ENCODE measurements at regions of chr16 and their contacts with region 1.

Region 1: DNA sequence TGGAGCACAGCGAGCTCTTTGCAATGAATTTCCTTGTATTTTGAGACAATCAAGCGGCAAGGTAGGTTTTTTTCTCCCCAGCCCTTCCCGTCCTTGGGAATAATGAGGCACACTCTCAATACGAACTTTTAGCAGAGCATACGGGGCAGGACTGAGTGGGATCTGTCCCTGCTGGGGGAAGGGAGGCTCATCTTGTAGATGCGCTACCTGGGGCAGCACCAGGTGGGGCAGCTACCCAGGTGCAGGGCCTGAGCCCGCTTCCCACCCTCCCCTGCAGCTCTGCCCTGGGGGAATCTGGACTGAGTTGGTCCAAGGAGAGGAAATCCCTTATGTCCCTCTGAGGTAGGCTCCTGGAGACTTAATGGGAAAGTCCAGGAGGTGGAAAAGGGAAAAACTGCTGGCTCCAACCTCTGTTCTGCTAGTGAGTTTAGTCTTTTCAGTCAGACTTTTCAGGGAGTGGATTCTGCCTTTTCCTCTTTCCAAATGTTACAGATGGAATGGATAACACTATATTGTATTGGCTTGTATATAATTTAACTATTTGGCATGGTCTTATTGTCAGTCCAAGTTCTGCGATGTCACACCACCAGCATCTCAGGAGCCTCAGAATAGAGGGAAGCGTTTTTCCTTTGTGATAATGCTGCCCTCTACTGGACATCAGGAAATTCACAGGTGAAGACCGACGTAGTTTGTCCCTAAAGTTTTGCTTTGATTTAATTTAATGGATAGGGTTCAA is 9.6 kb upstream of the CES1 start:
- DNase-seq: no peak

Region 2: GRCh38 chr16:55465077-55465896 is 377.2 kb before region 1 on chr16:
- intact Hi-C with region 1: loop called (anchors 10 kb)
- DNase-seq: peak; percentile 93

Region 3: DNA sequence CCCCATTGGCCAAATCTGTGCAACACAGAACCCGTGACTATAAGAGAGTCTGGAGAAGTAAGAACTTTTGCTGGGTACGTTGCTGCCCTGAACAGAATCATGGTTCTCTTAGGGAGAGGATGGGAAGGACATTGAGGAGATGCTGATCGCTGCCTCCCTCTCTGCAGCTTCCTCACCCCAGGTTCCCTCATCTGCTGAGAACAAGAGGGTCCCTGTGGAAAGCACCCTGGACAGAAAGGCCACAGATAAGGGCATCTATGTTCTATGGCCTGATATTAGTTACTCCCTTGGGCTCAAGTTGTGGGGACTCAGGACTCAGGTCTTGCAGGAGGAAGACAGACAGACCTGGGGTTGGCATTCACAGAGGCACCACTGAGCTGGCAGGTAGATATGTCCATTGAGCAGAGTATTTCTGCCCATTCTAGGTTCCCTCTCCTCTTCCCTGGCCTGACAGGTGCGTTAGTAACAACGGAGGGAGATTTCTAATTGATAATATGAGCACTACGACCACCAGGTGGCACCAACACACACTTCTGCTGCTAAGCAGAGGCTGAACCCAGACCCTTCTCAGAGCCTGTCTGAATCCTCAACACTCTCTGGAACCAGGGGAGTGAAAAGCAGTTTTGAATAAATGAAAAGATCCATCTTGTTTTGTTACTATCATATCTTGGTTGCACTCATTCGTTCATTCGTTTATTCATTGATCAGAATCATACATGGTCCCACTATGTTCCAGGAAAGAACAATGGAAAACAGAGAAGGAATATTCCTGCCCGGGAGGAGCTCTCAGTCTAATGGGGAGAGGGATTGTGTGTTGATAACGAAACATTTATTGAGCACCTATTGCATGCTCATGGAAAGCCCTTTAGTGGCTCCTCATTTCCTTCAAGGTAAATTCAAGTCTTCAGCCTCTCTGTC is 130.3 kb before region 1 on chr16:
- intact Hi-C with region 1: loop called (anchors 1 kb)
- DNase-seq: no peak

Measured in cardiac septum (tissue), 1 donor.